AG04450 (cell line): ENCODE measurements at regions of chr10 and their contacts with region 1.

Region 1: GRCh38 chr10:11986593-11987216 is 55.9 kb downstream of the UPF2 start:
- DNase-seq: peak; percentile 61
- H3K4me3 ChIP-seq: no peak overlapping the region
- H3K27ac ChIP-seq: no peak overlapping the region
- H3K27me3 ChIP-seq: no peaks in the 10 kb centered on the region
- CTCF ChIP-seq: peak; percentile 88

Region 2: DNA sequence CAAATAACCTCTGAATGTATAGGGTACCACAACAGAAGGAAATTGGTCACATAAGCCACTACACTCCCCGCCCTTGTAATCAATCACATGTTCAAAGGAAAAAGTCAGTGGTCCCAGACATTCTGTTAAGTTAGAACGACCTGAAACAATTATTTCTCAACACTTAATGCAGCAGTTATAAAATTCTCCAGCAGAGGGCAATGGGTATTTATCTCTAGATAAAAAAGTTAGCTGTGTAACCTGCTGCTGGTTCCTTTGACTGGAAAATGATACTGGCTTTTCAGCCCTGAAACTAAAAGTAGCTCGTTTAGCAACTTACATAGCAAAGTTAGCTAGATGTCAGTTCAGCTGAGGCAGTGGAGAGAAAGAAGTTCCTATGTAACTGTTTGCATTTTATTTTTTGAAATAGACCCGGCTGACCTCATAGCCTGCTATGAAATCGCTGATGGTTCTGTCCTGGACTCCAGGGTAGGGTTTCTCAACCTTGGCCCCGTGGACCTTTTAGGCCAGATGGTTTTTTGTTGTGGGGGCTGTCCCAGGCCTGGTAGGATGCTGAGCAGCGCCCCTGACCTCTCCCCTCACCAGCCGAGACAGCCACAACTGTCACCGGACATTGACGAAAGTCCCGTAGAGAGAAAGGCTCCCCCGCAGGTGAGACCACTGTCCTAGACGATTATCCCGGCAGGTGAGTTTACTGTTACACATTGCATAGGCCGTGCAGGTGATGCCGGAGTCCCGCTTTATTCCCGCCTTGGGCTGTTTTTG is 203.7 kb before region 1 on chr10:
- CTCF ChIA-PET with region 1: interaction called, 68 read pairs
- POLR2A ChIA-PET with region 1: no interaction called
- DNase-seq: peak; percentile 32
- H3K4me3 ChIP-seq: no peak overlapping the region
- H3K27ac ChIP-seq: no peak overlapping the region
- H3K27me3 ChIP-seq: peaks cover 5% of the 10 kb centered on the region
- CTCF ChIP-seq: peak; percentile 80

Region 3: DNA sequence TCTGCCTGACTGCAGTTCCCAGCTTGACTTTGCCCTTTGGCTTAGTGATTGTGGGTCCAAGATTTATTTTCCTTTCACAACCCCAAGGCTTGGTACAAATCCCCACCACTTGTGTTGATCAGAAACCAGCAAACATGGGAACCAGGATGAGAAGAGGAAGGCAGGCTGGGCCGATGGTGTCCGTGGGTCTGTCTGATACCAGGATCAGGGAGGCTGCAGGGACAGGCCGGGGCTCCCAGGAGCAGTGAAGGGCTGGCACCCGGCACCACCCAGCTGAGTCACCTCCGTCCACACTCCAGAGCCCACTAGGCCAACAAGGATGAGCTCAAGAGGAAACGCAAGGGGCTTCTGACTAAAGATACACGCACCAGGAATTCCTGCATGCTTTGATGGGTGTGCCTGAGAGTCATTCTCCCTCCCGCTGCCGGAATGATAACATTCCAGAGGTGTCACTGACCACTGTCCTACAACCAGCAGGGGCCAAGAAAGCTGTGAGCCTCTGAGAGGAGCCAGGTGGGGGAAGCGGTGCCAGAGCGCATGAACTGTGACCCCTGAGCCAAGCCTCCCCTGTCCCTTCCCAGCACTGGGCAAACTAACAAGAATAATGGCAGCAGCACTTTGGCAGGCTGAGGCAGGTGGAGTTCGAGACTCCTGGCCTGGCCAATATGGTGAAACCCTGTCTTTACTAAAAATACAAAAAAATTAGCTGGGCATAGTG is 192.8 kb before region 1 on chr10:
- CTCF ChIA-PET with region 1: interaction called, 14 read pairs
- POLR2A ChIA-PET with region 1: interaction called, 4 read pairs
- DNase-seq: no peak
- H3K4me3 ChIP-seq: no peak overlapping the region
- H3K27ac ChIP-seq: no peak overlapping the region
- H3K27me3 ChIP-seq: no peaks in the 10 kb centered on the region
- CTCF ChIP-seq: no peak

Region 4: DNA sequence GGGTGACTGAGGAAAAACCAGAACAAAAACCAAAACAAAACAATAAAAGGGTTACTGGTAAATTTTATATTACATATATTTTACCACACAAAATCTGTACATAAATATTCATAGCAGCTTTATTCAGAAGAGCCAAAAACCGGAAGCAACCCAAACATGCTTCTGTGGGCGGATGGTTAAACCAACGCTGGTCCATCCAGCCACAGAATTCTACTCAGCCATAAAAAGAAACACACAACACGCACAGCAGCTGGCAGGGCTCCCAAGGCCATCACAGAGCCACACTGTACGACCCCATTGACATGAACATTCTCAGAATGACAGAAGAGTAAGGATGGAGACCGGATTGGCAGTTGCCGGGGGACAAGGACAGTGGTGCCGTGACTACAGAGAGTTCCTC is 80.0 kb before region 1 on chr10:
- CTCF ChIA-PET with region 1: no interaction called
- POLR2A ChIA-PET with region 1: no interaction called
- DNase-seq: no peak
- H3K4me3 ChIP-seq: no peak overlapping the region
- H3K27ac ChIP-seq: no peak overlapping the region
- H3K27me3 ChIP-seq: peaks cover 8% of the 10 kb centered on the region
- CTCF ChIP-seq: no peak

Region 5: GRCh38 chr10:11949152-11949551 is 37.6 kb before region 1 on chr10:
- CTCF ChIA-PET with region 1: interaction called, 12 read pairs
- POLR2A ChIA-PET with region 1: no interaction called
- DNase-seq: no peak
- H3K4me3 ChIP-seq: no peak overlapping the region
- H3K27ac ChIP-seq: no peak overlapping the region
- H3K27me3 ChIP-seq: no peaks in the 10 kb centered on the region
- CTCF ChIP-seq: no peak

Region 6: GRCh38 chr10:11958956-11959355 is 27.7 kb before region 1 on chr10:
- CTCF ChIA-PET with region 1: interaction called, 19 read pairs
- POLR2A ChIA-PET with region 1: no interaction called
- DNase-seq: no peak
- H3K4me3 ChIP-seq: no peak overlapping the region
- H3K27ac ChIP-seq: no peak overlapping the region
- H3K27me3 ChIP-seq: no peaks in the 10 kb centered on the region
- CTCF ChIP-seq: no peak

Region 7: DNA sequence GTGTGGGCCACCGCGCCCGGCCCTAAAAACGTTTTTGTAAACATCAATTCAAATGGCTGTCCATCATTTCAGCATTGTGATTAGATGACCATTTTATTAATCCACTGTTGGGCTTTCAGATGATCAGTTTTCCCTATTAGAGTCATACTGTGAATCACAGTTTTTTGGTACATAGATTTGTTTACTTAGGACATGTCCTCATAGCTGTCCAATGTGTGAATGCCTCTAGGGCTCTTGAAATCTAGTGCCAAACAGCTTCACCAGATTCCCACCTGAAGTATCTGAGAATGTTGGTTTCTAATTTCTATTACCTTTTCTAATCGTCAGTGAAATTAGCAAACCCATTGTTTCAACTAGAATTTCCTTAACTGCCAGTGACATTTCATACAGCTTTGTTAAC is 10.9 kb before region 1 on chr10:
- CTCF ChIA-PET with region 1: interaction called, 12 read pairs
- POLR2A ChIA-PET with region 1: no interaction called
- DNase-seq: no peak
- H3K4me3 ChIP-seq: no peak overlapping the region
- H3K27ac ChIP-seq: no peak overlapping the region
- H3K27me3 ChIP-seq: no peaks in the 10 kb centered on the region
- CTCF ChIP-seq: no peak

Region 8: DNA sequence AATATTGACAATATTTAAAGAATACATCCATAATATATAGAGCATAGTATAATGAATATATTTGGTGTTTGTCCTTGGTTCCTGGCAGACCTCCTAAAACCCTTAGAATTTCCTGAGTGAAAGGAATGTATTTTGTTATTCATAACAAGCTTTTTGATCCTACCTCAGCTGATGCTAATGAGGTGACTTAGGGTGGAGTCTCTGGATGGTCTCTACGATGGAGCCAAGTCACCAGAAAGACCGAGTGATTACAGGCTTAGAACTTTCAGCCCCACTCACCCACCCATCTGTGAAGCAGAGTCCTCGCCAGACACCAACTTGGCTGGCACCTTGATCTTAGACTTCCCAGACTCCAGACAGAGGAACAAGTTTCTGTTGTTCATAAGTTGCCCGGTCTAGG is 20.0 kb after region 1 on chr10:
- CTCF ChIA-PET with region 1: interaction called, 33 read pairs
- POLR2A ChIA-PET with region 1: no interaction called
- DNase-seq: no peak
- H3K4me3 ChIP-seq: no peak overlapping the region
- H3K27ac ChIP-seq: no peak overlapping the region
- H3K27me3 ChIP-seq: no peaks in the 10 kb centered on the region
- CTCF ChIP-seq: no peak

Region 9: DNA sequence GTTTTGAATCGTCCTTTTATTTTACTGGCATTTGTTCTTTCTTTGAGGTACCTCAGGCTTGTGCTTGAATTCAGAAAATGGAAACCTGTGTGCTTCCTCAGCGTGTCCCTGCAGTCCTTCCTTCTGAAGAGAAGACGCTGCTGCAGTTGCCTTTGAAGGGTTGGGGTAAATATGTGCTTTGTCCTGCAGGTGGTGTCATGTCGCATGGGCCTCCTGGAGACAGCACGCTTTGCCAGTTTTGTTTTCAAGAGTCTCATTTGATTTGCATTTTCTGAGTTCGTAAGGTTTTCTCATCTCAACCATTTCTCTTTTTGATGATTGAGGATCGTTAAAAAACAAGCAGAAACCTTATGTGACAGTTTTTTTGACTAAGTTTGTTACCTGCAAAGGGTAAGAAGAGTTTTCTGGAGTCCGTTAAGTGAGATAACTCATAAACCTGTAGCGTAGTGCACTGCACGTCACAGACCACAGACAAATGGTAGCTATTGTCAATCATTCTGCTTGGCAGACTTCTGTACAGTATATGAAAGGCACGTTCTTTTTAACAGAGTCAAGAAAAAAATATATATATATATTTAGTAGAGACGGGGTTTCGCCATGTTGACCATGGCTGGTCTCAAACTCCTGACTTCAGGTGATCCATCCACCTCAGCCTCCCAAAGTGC is 266.3 kb after region 1 on chr10:
- CTCF ChIA-PET with region 1: no interaction called
- POLR2A ChIA-PET with region 1: no interaction called
- DNase-seq: no peak
- H3K4me3 ChIP-seq: no peak overlapping the region
- H3K27ac ChIP-seq: no peak overlapping the region
- H3K27me3 ChIP-seq: no peaks in the 10 kb centered on the region
- CTCF ChIP-seq: peak; percentile 35